ENCODE measurements at regions of chr17 and their contacts with region 1.

Region 1: DNA sequence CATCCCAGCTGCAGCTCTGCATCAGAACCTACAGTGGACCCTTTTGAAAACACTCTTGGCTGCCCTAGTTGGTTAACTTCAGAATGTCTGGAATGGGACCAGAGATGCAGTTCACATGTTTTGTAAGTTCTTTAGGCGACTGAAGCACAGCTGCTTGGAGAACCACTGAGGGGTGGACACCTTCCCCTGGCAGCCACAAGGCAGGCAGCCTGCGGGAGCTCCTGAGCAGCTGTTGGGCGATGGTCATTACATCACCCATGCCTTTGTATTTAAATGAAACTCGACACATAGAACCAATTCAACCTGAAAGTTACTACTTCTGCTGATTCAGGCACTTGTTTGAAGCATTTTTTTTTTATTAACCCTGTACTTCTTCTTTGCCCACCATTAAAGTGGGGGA is 151.5 kb downstream of the LGALS9B start:
- DNase-seq: no peak
- H3K4me3 ChIP-seq: no peak overlapping the region
- H3K27ac ChIP-seq: no peak overlapping the region
- H3K4me1 ChIP-seq: peaks cover 0 to 7% (median 6%) of the 10 kb centered on the region in 4 donors
- H3K27me3 ChIP-seq: no peaks in the 10 kb centered on the region
- CTCF ChIP-seq: no peak
- EP300 ChIP-seq: no peak
- POLR2A ChIP-seq: no peak

Region 2: GRCh38 chr17:19992803-19993713 is 322.8 kb before region 1 on chr17:
- in situ Hi-C with region 1: loop called in 2 of 4 experiments (anchors 10 to 25 kb)
- intact Hi-C with region 1: no loop called
- DNase-seq: peak; percentile 86
- H3K4me3 ChIP-seq: no peak overlapping the region
- H3K27ac ChIP-seq: no peak overlapping the region
- H3K4me1 ChIP-seq: peaks cover 0 to 11% (median 3%) of the 10 kb centered on the region in 4 donors
- H3K27me3 ChIP-seq: no peaks in the 10 kb centered on the region
- CTCF ChIP-seq: peak; percentile 68 to 82 (median 73)
- EP300 ChIP-seq: no peak
- POLR2A ChIP-seq: no peak

Region 3: DNA sequence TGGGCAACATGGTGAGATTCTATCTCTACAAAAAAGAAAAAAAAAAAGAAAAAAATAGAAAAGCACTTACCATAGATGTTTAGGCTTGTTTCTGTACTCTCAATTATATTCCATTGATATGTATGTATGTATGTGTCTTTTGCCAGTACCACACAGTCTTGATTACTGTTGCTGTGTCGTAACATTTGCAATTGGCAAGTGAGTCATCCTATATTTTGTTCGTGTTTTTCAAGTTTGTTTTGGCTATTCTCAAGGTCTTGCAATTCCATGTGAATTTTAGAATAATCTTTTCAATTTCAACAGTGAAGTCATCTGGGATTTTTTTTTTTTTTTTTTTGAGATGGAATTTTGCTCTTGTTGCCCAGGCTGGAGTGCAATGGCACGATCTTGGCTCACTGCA is 287.4 kb before region 1 on chr17:
- in situ Hi-C with region 1: no loop called
- intact Hi-C with region 1: no loop called
- DNase-seq: no peak
- H3K4me3 ChIP-seq: no peak overlapping the region
- H3K27ac ChIP-seq: no peak overlapping the region
- H3K4me1 ChIP-seq: no peaks in the 10 kb centered on the region
- H3K27me3 ChIP-seq: peaks cover 6% of the 10 kb centered on the region
- CTCF ChIP-seq: no peak
- EP300 ChIP-seq: no peak
- POLR2A ChIP-seq: no peak

Region 4: GRCh38 chr17:20121359-20122253 is 194.2 kb before region 1 on chr17:
- in situ Hi-C with region 1: loop called in 3 of 4 experiments (anchors 10 to 25 kb)
- intact Hi-C with region 1: loop called (anchors 10 kb)
- DNase-seq: peak; percentile 68
- H3K4me3 ChIP-seq: no peak overlapping the region
- H3K27ac ChIP-seq: no peak overlapping the region
- H3K4me1 ChIP-seq: peaks cover 0 to 10% (median 7%) of the 10 kb centered on the region in 4 donors
- H3K27me3 ChIP-seq: no peaks in the 10 kb centered on the region
- CTCF ChIP-seq: peak; percentile 84 to 87 (median 84)
- EP300 ChIP-seq: no peak
- POLR2A ChIP-seq: no peak

Region 5: DNA sequence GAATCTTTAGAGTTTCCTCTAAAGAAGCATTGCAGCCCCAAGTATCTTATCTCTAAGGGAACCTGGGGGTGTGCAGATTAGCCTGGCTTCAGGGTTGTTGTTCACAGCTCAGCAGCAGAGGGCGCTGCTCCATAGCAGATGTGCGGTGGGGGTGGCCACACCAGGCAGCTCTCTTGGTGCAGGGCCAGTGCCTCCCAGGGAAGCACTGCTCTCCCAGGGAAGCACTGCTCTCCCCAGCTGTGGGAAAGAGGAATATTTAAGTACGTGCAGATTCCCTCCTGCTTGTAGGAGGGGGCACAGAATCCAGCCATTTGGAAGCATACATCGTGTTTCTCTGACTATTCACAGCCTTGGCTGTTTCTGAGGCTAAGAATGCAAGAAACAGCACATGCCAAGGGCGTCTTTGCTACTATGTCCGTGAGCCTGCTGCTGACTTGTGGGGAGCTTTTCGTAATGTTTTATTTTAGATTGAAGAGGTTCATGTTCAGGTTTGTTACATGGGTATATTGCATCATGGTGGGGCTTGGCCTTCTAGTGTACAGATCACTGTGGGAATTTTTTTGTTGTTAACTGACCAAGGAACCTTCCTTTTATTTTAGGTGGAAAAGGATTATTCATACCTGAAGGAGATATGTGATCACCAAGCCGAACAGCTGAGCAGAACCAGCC is 88.9 kb before region 1 on chr17:
- in situ Hi-C with region 1: loop called in 1 of 4 experiments (anchors 10 kb)
- intact Hi-C with region 1: loop called (anchors 5 kb)
- DNase-seq: peak; percentile 81
- H3K4me3 ChIP-seq: no peak overlapping the region
- H3K27ac ChIP-seq: no peak overlapping the region
- H3K4me1 ChIP-seq: peaks cover 0 to 4% (median 4%) of the 10 kb centered on the region in 4 donors
- H3K27me3 ChIP-seq: no peaks in the 10 kb centered on the region
- CTCF ChIP-seq: peak; percentile 72 to 88 (median 76)
- EP300 ChIP-seq: no peak
- POLR2A ChIP-seq: no peak

Region 6: DNA sequence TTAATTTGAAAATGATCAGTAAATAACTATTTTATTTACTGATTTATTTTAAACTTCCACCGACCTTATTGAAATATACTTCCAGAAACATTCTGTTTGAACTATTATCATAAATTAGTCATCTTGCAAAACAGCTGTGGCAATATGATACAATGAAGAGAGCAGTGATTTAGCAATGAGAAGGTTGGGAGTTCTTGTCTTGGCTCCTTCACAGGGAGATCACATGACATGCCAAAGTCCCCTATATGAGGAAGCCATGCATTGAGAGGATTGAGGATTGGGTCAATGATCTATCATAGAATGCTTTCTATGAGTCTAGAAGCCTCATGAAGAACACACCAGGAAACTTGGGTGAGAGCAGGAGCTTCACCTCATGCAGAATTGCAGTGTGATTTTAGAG is 71.2 kb before region 1 on chr17:
- in situ Hi-C with region 1: loop called in 1 of 4 experiments (anchors 10 kb)
- intact Hi-C with region 1: no loop called
- DNase-seq: no peak
- H3K4me3 ChIP-seq: no peak overlapping the region
- H3K27ac ChIP-seq: no peak overlapping the region
- H3K4me1 ChIP-seq: peaks cover 0 to 6% (median 0%) of the 10 kb centered on the region in 4 donors
- H3K27me3 ChIP-seq: no peaks in the 10 kb centered on the region
- CTCF ChIP-seq: no peak
- EP300 ChIP-seq: no peak
- POLR2A ChIP-seq: no peak

Region 7: GRCh38 chr17:20562587-20562986 is 246.8 kb after region 1 on chr17:
- in situ Hi-C with region 1: no loop called
- intact Hi-C with region 1: no loop called
- DNase-seq: no peak
- H3K4me3 ChIP-seq: no peak overlapping the region
- H3K27ac ChIP-seq: no peak overlapping the region
- H3K4me1 ChIP-seq: no peaks in the 10 kb centered on the region
- H3K27me3 ChIP-seq: no peaks in the 10 kb centered on the region
- CTCF ChIP-seq: no peak
- EP300 ChIP-seq: no peak
- POLR2A ChIP-seq: no peak